AG04449 (cell line): ENCODE measurements at regions of chr1 and their contacts with region 1.

Region 1: DNA sequence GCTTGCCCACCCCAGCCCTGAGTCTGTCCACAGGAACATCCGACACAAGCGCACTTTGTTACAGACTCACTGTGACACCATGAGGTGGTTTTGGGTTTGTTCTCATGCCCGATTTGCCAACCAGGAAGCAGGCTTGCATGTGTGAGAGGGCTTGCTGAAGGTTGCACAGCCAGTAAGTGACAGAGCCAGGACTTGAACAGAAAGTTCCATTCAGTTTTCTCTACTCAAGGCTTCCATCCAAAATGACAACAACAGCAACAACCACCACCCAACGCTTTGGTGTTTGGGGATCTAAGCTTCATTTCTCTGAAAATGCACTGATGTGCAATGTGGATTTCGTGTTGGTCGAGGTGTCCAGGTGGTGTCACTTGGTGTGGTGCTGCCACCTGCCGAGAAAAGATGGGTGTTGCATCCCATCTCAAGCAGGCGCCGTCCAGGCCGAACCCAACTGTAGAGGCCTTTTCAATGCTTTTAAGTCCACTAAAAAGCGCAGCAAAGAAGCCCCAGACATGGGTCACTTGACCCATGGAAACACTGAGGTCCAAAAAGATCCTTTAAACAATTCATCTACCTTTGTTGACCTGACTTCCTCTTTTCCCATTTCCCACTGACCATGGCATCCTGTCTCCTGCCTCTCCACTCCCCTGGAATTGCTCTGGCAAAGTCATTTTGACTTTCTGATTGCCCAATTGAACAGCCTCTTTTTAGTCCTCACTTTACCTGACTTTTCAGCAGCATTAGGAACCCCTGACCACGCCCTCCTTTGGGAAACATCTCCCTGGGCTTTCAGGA is 12.2 kb downstream of the CITED4 start:
- DNase-seq: no peak
- H3K4me3 ChIP-seq: no peak overlapping the region
- CTCF ChIP-seq: peak; percentile 85

Region 2: GRCh38 chr1:40612345-40612831 is 237.6 kb before region 1 on chr1:
- CTCF ChIA-PET with region 1: interaction called, 42 read pairs
- POLR2A ChIA-PET with region 1: no interaction called
- DNase-seq: no peak
- H3K4me3 ChIP-seq: no peak overlapping the region
- CTCF ChIP-seq: peak; percentile 80

Region 3: GRCh38 chr1:40630488-40631381 is 219.3 kb before region 1 on chr1:
- CTCF ChIA-PET with region 1: interaction called, 41 read pairs
- POLR2A ChIA-PET with region 1: no interaction called
- DNase-seq: no peak
- H3K4me3 ChIP-seq: no peak overlapping the region
- CTCF ChIP-seq: peak; percentile 66

Region 4: GRCh38 chr1:40825435-40825788 is 24.6 kb before region 1 on chr1:
- CTCF ChIA-PET with region 1: interaction called, 26 read pairs
- POLR2A ChIA-PET with region 1: interaction called, 3 read pairs
- DNase-seq: no peak
- H3K4me3 ChIP-seq: no peak overlapping the region
- CTCF ChIP-seq: no peak

Region 5: DNA sequence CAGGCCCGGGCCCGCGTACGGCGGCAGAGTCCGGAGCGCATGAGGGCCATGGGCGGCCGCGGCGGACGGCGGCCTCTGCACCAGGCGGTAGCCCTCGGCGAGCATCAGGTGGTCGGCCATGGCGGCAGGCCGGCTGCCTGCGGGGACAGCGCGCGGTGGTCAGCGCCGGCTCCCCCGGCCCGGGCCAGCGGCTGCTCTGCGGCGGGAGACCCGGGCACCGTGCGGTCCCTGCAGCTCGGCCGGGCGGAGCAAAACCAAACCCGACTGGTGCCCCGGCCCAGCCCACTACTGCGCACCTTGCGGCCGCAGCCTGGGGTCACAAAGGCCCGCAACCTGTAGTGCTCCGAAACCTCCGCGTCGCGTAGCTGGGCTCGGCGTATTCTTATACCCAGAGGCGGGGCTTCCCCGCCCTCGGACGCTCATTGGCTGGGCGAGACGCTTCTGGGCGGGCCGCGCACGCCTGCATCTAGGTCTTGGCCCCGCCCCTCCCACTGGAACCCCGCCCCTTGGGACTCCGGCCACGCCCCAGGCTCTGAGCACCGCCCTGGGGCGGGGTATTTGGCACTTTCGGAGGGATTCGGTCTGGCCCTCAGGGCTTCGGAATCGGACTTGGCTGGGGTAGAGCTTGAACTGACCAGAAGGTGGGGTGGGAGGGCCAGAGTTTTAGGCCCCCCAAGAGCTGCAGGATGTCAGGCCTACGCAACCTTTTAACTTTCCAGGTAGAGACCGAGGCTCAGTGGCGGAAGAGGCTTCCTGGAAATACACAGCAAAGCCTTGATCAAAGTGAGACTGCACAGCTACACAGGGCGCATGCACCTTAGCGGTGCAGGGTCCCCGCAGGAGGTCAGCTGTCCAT is 12.2 kb after region 1 on chr1 and contains the start of gene CITED4:
- CTCF ChIA-PET with region 1: interaction called, 67 read pairs
- POLR2A ChIA-PET with region 1: interaction called, 3 read pairs
- DNase-seq: no peak
- H3K4me3 ChIP-seq: peak within 1 kb of the TSS; percentile 66
- CTCF ChIP-seq: peak; percentile 1

Region 6: GRCh38 chr1:41003640-41004220 is 153.7 kb after region 1 on chr1:
- CTCF ChIA-PET with region 1: interaction called, 49 read pairs
- POLR2A ChIA-PET with region 1: no interaction called
- DNase-seq: peak; percentile 97
- H3K4me3 ChIP-seq: no peak overlapping the region
- CTCF ChIP-seq: peak; percentile 70

Region 7: DNA sequence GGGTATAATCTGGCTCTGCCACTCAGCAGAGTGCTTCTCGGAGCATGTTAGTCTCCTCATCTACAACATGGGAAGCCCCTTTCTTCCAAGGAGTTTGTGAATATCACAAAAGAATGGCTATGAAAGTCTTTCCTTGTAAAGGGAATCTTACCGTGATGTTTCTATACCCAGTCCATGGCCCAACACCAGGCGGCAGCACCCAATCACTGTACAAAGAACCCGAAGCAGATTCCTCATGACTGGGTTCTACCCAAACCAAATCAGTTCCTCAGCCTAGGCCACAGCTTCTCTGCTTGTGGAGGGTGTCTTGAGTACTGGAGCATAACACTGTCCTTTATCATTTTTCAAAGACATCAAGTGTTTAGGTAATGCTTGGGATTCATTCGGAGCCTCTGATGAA is 188.1 kb after region 1 on chr1:
- CTCF ChIA-PET with region 1: no interaction called
- POLR2A ChIA-PET with region 1: no interaction called
- DNase-seq: no peak
- H3K4me3 ChIP-seq: no peak overlapping the region
- CTCF ChIP-seq: no peak